Calu3 (cell line): ENCODE measurements at regions of chr3 and their contacts with region 1.

Region 1: GRCh38 chr3:181210275-181210674 is 220.7 kb upstream of the DNAJC19 start:
- DNase-seq: no peak
- H3K4me3 Mint-ChIP-seq: no peak overlapping the region
- H3K27ac Mint-ChIP-seq: no peak overlapping the region
- H3K4me1 Mint-ChIP-seq: no peaks in the 10 kb centered on the region
- H3K27me3 Mint-ChIP-seq: no peaks in the 10 kb centered on the region
- CTCF ChIP-seq: no peak

Region 2: GRCh38 chr3:181066143-181067087 is 143.9 kb before region 1 on chr3:
- CTCF ChIA-PET with region 1: no interaction called
- intact Hi-C with region 1: no loop called
- DNase-seq: no peak
- H3K4me3 Mint-ChIP-seq: no peak overlapping the region
- H3K27ac Mint-ChIP-seq: no peak overlapping the region
- H3K4me1 Mint-ChIP-seq: no peaks in the 10 kb centered on the region
- H3K27me3 Mint-ChIP-seq: peaks cover 1% of the 10 kb centered on the region
- CTCF ChIP-seq: no peak

Region 3: DNA sequence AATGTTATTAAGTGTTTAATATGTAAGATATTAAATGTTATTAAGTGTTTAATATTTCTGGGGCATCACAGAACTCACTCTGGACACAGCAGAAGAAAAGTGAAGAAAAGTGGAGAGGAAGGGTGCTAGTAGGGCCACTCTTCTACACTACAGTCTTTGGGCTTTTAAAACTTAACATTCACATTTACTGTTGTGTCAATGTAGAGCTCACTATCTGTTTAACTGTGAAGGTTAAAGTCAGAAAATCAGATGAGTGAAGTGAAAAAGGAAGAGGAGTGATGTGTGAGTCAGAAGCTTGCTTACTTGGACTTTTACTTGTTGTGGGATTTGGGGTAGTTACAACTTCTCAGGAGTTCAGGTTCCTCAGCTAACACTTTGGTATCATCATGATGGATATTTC is 75.4 kb before region 1 on chr3:
- CTCF ChIA-PET with region 1: no interaction called
- intact Hi-C with region 1: no loop called
- DNase-seq: no peak
- H3K4me3 Mint-ChIP-seq: no peak overlapping the region
- H3K27ac Mint-ChIP-seq: no peak overlapping the region
- H3K4me1 Mint-ChIP-seq: no peaks in the 10 kb centered on the region
- H3K27me3 Mint-ChIP-seq: peaks cover 29% of the 10 kb centered on the region
- CTCF ChIP-seq: no peak

Region 4: GRCh38 chr3:181278468-181279238 is 68.4 kb after region 1 on chr3:
- CTCF ChIA-PET with region 1: interaction called, 35 read pairs
- intact Hi-C with region 1: loop called (anchors 1 kb)
- DNase-seq: no peak
- H3K4me3 Mint-ChIP-seq: no peak overlapping the region
- H3K27ac Mint-ChIP-seq: no peak overlapping the region
- H3K4me1 Mint-ChIP-seq: peaks cover 19% of the 10 kb centered on the region
- H3K27me3 Mint-ChIP-seq: no peaks in the 10 kb centered on the region
- CTCF ChIP-seq: no peak

Region 5: GRCh38 chr3:181326637-181327223 is 116.5 kb after region 1 on chr3:
- CTCF ChIA-PET with region 1: interaction called, 12 read pairs
- intact Hi-C with region 1: loop called (anchors 2 kb)
- DNase-seq: peak; percentile 30
- H3K4me3 Mint-ChIP-seq: no peak overlapping the region
- H3K27ac Mint-ChIP-seq: no peak overlapping the region
- H3K4me1 Mint-ChIP-seq: peaks cover 18% of the 10 kb centered on the region
- H3K27me3 Mint-ChIP-seq: no peaks in the 10 kb centered on the region
- CTCF ChIP-seq: peak; percentile 82

Region 6: DNA sequence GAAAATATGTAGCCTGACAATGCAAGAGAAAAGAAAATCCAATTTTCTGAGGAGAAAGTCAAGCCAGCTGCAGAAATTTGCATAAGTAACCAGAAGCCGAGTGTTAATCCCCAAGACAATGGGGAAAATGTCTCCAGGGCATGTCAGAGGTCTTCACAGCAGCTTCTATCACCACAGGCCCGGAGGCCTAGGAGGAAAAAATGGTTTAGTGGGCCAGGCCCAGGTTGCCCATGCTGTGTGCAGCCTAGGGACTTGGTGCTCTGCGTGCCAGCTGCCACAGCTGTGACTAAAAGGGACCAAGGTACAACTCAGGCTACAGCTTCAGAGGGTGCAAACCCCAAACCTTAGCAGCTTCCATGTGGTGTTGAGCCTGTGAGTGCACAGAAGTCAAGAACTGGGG is 300.2 kb after region 1 on chr3:
- CTCF ChIA-PET with region 1: no interaction called
- intact Hi-C with region 1: no loop called
- DNase-seq: no peak
- H3K4me3 Mint-ChIP-seq: no peak overlapping the region
- H3K27ac Mint-ChIP-seq: no peak overlapping the region
- H3K4me1 Mint-ChIP-seq: no peaks in the 10 kb centered on the region
- H3K27me3 Mint-ChIP-seq: no peaks in the 10 kb centered on the region
- CTCF ChIP-seq: no peak

Region 7: GRCh38 chr3:181549266-181549665 is 339.0 kb after region 1 on chr3:
- CTCF ChIA-PET with region 1: no interaction called
- intact Hi-C with region 1: loop called (anchors 10 kb)
- DNase-seq: no peak
- H3K4me3 Mint-ChIP-seq: no peak overlapping the region
- H3K27ac Mint-ChIP-seq: no peak overlapping the region
- H3K4me1 Mint-ChIP-seq: peaks cover 12% of the 10 kb centered on the region
- H3K27me3 Mint-ChIP-seq: no peaks in the 10 kb centered on the region
- CTCF ChIP-seq: no peak